K562 (cell line): ENCODE measurements at regions of chr3 and their contacts with region 1.

Region 1: GRCh38 chr3:187738331-187739093 is 6.8 kb downstream of the BCL6 start:
- DNase-seq: peak; percentile 75 to 86 (median 80)
- ATAC-seq: peak; percentile 68
- H3K4me3 ChIP-seq: peak overlapping the region; percentile 38
- H3K27ac ChIP-seq: no peak overlapping the region
- H3K4me1 ChIP-seq: peaks cover 43 to 64% of the 10 kb centered on the region in 2 experiments
- H3K27me3 ChIP-seq: peaks cover 0 to 13% of the 10 kb centered on the region in 2 experiments; a peak in 1 of 5 replicates
- CTCF ChIP-seq: peak; percentile 74 to 87 (median 84)
- EP300 ChIP-seq: no peak
- POLR2A ChIP-seq: no peak
- RAD21 ChIP-seq: peak; percentile 80 to 81

Region 2: GRCh38 chr3:187709155-187709554 is 29.4 kb before region 1 on chr3:
- CTCF ChIA-PET with region 1: no interaction called
- POLR2A ChIA-PET with region 1: no interaction called
- in situ Hi-C with region 1: no loop called
- intact Hi-C with region 1: no loop called
- DNase-seq: peak in 3 of 4 experiments; percentile 13 to 20 (median 19)
- ATAC-seq: peak; percentile 76
- H3K4me3 ChIP-seq: no peak overlapping the region
- H3K27ac ChIP-seq: no peak overlapping the region
- H3K4me1 ChIP-seq: no peaks in the 10 kb centered on the region
- H3K27me3 ChIP-seq: peaks cover 0 to 6% of the 10 kb centered on the region in 2 experiments; a peak in 1 of 5 replicates
- CTCF ChIP-seq: peak; percentile 26 to 68 (median 33); a peak in 4 of 6 replicates
- EP300 ChIP-seq: no peak
- POLR2A ChIP-seq: no peak
- RAD21 ChIP-seq: no peak

Region 3: DNA sequence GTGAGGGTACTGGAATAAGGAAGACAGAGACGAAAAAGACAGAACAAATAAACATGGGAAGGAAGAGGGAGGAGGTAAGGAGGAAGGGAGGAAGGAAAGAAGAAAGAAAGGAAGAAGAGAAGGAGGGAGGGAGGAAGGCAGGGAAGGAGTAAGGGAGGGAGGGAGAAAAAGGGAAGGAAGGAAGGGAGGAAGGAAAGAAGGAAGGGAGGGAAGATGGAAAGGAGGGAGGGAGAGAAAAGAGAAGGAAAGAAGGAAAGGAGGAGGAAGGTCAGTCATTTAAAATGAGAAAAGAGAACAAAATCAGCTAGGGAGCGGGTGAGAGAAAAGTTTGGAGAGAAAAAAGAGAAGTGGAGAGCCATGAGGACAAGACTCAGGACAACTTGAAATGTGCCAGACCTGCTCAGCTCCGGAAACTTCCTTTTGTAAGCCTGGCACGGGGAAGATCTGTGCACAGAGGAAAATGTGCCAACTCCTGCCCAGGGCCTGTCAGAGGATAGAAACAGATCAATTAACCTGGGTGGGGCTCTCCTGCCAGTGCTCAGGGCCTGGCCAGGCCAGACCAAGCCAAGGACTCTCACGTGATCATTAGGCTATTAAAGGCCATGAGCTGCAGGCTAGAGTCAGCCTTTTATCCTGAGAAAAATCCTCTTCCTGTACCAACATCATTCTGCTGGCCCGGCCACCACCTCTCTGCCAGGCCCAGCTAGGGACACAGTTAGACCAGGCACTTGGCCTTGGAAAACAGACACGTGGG is 56.9 kb after region 1 on chr3:
- CTCF ChIA-PET with region 1: no interaction called
- POLR2A ChIA-PET with region 1: no interaction called
- in situ Hi-C with region 1: no loop called
- intact Hi-C with region 1: no loop called
- DNase-seq: no peak
- ATAC-seq: no peak
- H3K4me3 ChIP-seq: no peak overlapping the region
- H3K27ac ChIP-seq: no peak overlapping the region
- H3K4me1 ChIP-seq: no peaks in the 10 kb centered on the region
- H3K27me3 ChIP-seq: peaks cover 0 to 26% of the 10 kb centered on the region in 2 experiments; a peak in 3 of 5 replicates
- CTCF ChIP-seq: no peak
- EP300 ChIP-seq: no peak
- POLR2A ChIP-seq: no peak
- RAD21 ChIP-seq: no peak

Region 4: GRCh38 chr3:188041193-188041592 is 302.7 kb after region 1 on chr3:
- CTCF ChIA-PET with region 1: no interaction called
- POLR2A ChIA-PET with region 1: no interaction called
- in situ Hi-C with region 1: no loop called
- intact Hi-C with region 1: loop called (anchors 5 kb)
- DNase-seq: no peak
- ATAC-seq: no peak
- H3K4me3 ChIP-seq: no peak overlapping the region
- H3K27ac ChIP-seq: no peak overlapping the region
- H3K4me1 ChIP-seq: no peaks in the 10 kb centered on the region
- H3K27me3 ChIP-seq: no peaks in the 10 kb centered on the region
- CTCF ChIP-seq: no peak
- EP300 ChIP-seq: no peak
- POLR2A ChIP-seq: no peak
- RAD21 ChIP-seq: no peak

Region 5: DNA sequence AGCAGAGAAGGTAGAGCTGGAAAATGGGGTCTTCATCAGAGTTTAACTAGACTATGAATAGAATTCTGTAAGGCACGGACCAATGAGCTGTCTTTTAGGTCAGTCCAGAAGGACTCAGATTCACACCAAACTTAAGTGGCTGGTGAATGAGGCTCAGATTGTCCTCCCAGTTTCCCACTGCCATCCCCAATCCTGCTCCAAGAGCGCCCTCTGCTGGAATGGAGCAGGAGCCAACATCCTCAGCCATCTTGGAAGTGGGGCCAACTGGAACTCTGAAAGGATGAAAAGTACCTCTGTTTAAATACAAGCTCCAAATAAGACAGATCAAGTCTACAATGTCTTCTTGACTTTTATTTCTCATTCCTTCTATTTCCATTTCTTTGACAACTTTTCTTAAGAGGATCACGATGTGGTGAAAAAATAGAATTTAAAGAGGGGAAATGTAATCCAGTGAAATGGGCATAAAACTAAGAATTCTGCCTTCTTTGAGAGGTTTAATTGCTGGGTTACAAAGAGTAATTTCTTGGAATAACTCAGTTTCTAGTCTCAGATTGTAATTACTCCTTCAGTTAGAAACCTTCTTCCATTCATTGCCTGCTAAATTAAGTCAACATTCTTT is 1216.2 kb after region 1 on chr3:
- CTCF ChIA-PET with region 1: interaction called, 39 read pairs
- POLR2A ChIA-PET with region 1: interaction called, 5 read pairs
- in situ Hi-C with region 1: loop called (anchors 5 kb)
- intact Hi-C with region 1: loop called (anchors 1 kb)
- DNase-seq: peak; percentile 75 to 79 (median 76)
- ATAC-seq: peak; percentile 96
- H3K4me3 ChIP-seq: no peak overlapping the region
- H3K27ac ChIP-seq: no peak overlapping the region
- H3K4me1 ChIP-seq: no peaks in the 10 kb centered on the region
- H3K27me3 ChIP-seq: no peaks in the 10 kb centered on the region
- CTCF ChIP-seq: peak; percentile 78 to 86 (median 85)
- EP300 ChIP-seq: no peak
- POLR2A ChIP-seq: no peak
- RAD21 ChIP-seq: peak; percentile 89 to 94

Region 6: DNA sequence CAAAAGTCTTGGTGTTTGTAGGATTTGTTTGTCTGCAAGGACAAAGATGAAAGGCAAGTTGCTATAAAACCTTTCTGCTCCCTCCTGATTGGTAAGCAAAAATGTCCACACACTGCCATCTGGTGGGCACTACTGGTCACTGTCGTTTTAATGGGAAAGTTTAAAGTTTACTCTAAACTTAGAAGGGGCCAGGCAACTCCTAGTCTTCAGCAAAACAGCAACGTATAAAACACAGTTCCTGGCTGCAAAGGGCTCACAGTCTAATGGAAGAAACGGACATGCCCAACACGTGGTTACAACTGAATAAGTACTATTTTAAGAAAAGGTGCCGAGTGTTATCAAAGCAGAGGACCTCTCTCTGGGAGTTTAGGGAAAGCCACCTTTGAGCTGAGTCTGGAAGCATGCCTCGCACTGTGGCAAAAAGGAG is 1409.6 kb after region 1 on chr3:
- CTCF ChIA-PET with region 1: interaction called, 3 read pairs
- POLR2A ChIA-PET with region 1: no interaction called
- in situ Hi-C with region 1: loop called (anchors 25 kb)
- intact Hi-C with region 1: loop called (anchors 1 kb)
- DNase-seq: peak; percentile 40 to 57 (median 51)
- ATAC-seq: peak; percentile 82
- H3K4me3 ChIP-seq: no peak overlapping the region
- H3K27ac ChIP-seq: no peak overlapping the region
- H3K4me1 ChIP-seq: no peaks in the 10 kb centered on the region
- H3K27me3 ChIP-seq: no peaks in the 10 kb centered on the region
- CTCF ChIP-seq: peak; percentile 34 to 71 (median 61)
- EP300 ChIP-seq: no peak
- POLR2A ChIP-seq: no peak
- RAD21 ChIP-seq: peak; percentile 51 to 65; a peak in 3 of 4 replicates